ENCODE measurements at regions of chr12 and their contacts with region 1.

Region 1: DNA sequence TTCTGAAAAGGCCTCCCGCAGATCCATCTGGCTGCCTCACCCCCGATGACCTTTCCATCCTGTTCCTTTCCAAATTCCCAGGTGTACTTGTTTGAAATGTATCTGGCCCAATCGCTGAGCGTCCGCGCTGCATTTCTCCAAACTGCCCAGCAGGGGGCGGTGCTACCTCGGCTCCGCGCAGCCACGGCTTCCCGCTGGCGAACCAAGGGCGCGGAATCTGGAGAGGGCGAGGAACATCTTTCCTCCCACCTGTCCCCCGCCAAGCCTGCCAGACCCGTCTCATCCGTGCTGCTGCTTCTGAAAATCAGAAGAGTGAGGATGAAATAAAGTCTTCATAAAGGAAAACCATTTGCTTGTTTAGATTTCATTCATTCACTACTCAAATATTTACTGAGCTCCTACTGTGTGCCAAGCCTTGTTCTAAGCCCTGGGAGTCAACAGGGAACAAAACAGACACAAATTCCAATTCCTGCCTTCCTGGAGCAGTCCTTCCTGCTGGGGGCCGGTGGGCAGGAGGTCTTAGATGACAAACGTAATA is 16.8 kb upstream of the MYL2 start:
- DNase-seq: peak; percentile 61
- H3K4me3 Mint-ChIP-seq: no peak overlapping the region
- H3K27ac Mint-ChIP-seq: no peak overlapping the region
- H3K4me1 Mint-ChIP-seq: peaks cover 17% of the 10 kb centered on the region
- H3K27me3 Mint-ChIP-seq: no peaks in the 10 kb centered on the region
- CTCF ChIP-seq: peak; percentile 99

Region 2: GRCh38 chr12:110913119-110914056 is 23.8 kb before region 1 on chr12:
- CTCF ChIA-PET with region 1: interaction called, 13 read pairs
- POLR2A ChIA-PET with region 1: interaction called, 5 read pairs
- intact Hi-C with region 1: no loop called
- DNase-seq: no peak
- H3K4me3 Mint-ChIP-seq: no peak overlapping the region
- H3K27ac Mint-ChIP-seq: no peak overlapping the region
- H3K4me1 Mint-ChIP-seq: peaks cover 21% of the 10 kb centered on the region
- H3K27me3 Mint-ChIP-seq: no peaks in the 10 kb centered on the region
- CTCF ChIP-seq: no peak

Region 3: DNA sequence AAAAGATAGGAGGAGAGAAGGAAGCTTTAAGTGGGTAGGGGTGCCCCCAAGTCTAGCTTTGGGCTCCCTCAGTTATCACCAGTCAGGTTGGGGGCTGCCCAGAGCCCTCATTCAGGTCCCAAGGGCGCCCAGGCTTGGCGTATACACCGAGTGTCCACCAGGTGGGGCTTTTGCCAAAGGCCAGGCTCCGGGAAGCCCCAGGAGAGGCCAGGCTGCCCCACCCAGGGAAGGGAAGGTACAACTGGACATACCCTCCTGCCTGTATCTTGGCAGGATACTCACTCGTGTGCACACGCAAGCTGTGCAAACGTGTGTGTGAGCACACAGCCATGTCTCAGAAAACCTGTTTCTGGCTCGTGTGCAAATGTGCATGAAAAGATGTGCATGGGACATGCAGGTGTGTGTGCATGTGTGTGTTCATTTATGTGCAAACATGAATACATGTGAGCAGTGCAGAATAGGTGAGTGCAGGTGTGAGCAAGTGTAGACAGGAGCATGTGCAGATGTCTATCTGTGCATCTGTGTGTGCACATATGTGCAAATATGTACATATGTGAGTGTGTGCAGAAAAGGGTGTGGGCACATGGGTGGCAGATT is 87.1 kb after region 1 on chr12:
- CTCF ChIA-PET with region 1: interaction called, 6 read pairs
- POLR2A ChIA-PET with region 1: no interaction called
- intact Hi-C with region 1: loop called (anchors 2 kb)
- DNase-seq: peak; percentile 69
- H3K4me3 Mint-ChIP-seq: no peak overlapping the region
- H3K27ac Mint-ChIP-seq: no peak overlapping the region
- H3K4me1 Mint-ChIP-seq: no peaks in the 10 kb centered on the region
- H3K27me3 Mint-ChIP-seq: peaks cover 57% of the 10 kb centered on the region
- CTCF ChIP-seq: peak; percentile 88

Region 4: GRCh38 chr12:111174251-111174960 is 237.2 kb after region 1 on chr12:
- CTCF ChIA-PET with region 1: no interaction called
- POLR2A ChIA-PET with region 1: no interaction called
- intact Hi-C with region 1: loop called (anchors 10 kb)
- DNase-seq: peak; percentile 27
- H3K4me3 Mint-ChIP-seq: no peak overlapping the region
- H3K27ac Mint-ChIP-seq: no peak overlapping the region
- H3K4me1 Mint-ChIP-seq: no peaks in the 10 kb centered on the region
- H3K27me3 Mint-ChIP-seq: peaks cover 64% of the 10 kb centered on the region
- CTCF ChIP-seq: no peak

Region 5: DNA sequence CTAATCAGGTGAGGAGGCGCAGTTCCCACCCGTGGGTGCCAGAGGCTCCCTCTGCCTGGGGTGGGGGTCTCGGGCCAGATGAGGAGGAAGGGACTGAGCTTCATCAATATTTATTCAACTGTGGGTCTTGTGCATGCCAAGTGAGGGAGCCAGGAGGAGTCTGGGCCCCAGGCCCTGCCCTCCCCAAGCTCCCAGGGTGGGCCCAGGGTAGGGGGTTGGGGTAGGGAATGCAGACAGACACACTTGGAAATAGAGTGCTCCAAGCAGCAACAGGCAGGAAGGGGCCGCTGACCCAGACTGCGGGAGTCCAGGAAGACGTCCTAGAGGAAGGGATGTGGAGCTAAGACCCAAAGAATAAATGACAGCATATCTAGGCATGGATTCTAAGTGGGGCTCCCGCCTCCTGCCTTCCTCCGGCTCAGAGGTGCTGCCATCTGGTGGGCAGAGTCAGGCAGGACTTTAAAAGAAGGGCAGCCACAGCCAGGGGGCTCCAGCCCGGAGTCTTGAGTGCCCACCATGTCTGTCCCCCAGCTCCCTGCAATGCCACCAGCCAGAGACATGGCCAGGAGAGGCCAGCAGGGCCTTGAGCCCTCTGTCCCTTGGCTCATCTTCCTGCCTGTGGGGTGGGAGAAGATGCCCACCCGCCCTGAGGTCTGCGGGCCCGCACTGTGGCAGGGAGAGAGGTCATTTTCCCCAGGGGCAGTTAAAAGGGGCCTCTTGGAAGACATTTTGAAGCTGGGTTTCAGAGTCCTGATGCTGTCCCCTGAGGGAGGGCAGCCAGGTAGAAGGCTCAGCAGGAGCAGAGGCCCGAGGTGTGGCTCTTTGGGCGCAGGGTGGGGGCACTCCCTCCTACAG is 361.6 kb after region 1 on chr12:
- CTCF ChIA-PET with region 1: interaction called, 18 read pairs
- POLR2A ChIA-PET with region 1: no interaction called
- intact Hi-C with region 1: loop called (anchors 2 kb)
- DNase-seq: peak; percentile 63
- H3K4me3 Mint-ChIP-seq: no peak overlapping the region
- H3K27ac Mint-ChIP-seq: no peak overlapping the region
- H3K4me1 Mint-ChIP-seq: no peaks in the 10 kb centered on the region
- H3K27me3 Mint-ChIP-seq: no peaks in the 10 kb centered on the region
- CTCF ChIP-seq: peak; percentile 84

Region 6: DNA sequence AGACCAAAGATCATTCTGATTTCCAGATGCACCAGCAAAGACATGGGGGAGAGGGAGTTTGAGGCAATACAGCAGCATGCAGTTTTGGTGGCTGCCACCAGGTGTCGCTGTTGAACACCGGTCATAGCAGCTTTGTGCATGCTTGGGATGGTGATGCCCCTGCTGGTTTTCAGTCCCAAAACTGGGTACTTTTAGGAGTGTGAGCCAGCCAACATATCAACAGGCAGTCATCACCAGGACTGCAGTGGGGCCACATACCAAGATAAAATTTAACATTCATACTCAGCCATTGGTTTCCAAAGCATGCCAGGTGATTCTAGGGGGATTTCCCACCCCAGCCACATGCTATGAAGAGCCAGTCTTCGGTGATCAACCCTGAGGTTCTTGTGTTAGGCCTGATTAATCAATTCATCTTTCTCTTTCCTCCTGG is 367.5 kb after region 1 on chr12:
- CTCF ChIA-PET with region 1: interaction called, 18 read pairs
- POLR2A ChIA-PET with region 1: no interaction called
- intact Hi-C with region 1: loop called (anchors 2 kb)
- DNase-seq: no peak
- H3K4me3 Mint-ChIP-seq: no peak overlapping the region
- H3K27ac Mint-ChIP-seq: no peak overlapping the region
- H3K4me1 Mint-ChIP-seq: no peaks in the 10 kb centered on the region
- H3K27me3 Mint-ChIP-seq: no peaks in the 10 kb centered on the region
- CTCF ChIP-seq: peak; percentile 76

Region 7: GRCh38 chr12:111313833-111314259 is 376.7 kb after region 1 on chr12:
- CTCF ChIA-PET with region 1: interaction called, 5 read pairs
- POLR2A ChIA-PET with region 1: no interaction called
- intact Hi-C with region 1: loop called (anchors 2 kb)
- DNase-seq: peak; percentile 75
- H3K4me3 Mint-ChIP-seq: no peak overlapping the region
- H3K27ac Mint-ChIP-seq: no peak overlapping the region
- H3K4me1 Mint-ChIP-seq: peaks cover 6% of the 10 kb centered on the region
- H3K27me3 Mint-ChIP-seq: no peaks in the 10 kb centered on the region
- CTCF ChIP-seq: peak; percentile 91

Measured in MCF 10A (cell line).